Sigmoid colon (tissue), 7 donors: ENCODE measurements at regions of chr10 and their contacts with region 1.

Region 1: GRCh38 chr10:4498711-4499251 is 327.2 kb upstream of the AKR1E2 start:
- DNase-seq: no peak
- H3K4me3 ChIP-seq: no peak overlapping the region
- H3K27ac ChIP-seq: peak overlapping the region; percentile 77 to 88 (median 83)
- H3K4me1 ChIP-seq: peaks cover 0 to 17% (median 15%) of the 10 kb centered on the region in 4 donors
- H3K27me3 ChIP-seq: no peaks in the 10 kb centered on the region
- CTCF ChIP-seq: no peak
- EP300 ChIP-seq: peak in 2 of 4 donors; percentile 22 to 57
- POLR2A ChIP-seq: no peak

Region 2: DNA sequence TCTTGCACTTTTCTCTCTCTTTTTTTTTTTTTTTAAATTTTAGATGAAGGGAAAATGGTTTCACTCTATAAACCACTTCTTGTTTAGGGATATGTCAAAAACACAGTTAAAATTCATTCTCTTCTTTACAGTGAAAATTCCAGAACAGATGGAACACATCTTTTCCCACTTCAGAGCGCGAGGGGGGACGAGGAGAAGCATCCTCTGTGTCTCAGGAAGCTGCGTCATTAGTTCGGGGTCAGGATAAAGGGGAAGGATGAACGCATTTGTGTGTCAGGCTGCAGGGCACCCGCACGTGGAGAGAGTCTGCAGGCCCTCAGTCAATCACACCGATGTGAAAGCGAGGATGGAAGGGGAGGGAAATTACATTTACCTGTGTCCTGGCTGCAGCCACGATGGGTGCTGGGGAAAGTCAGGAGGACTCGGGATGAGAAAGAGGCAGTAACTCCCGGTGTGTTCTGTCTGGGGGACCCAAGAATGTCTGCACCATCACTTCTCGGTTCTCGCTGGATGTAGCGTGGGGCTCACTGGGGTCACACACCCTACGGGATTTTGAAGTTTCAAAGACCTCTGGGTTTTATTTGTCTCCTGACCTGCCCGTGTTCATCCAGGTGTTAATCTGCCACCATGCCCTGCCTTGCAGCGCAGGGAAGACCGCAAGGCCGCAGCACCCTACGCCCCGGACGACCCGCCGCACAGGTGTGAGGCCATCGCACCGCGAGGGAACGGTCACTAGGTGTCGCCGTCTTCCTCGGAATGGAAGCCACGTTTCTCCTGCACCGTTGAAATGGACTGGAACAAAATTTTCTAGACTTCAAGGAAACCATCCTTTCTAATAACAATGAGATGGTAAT is 1259.5 kb before region 1 on chr10:
- intact Hi-C with region 1: loop called (anchors 10 kb)
- DNase-seq: peak; percentile 86
- H3K4me3 ChIP-seq: no peak overlapping the region
- H3K27ac ChIP-seq: peak overlapping the region in 3 of 4 donors; percentile 2 to 52 (median 38)
- H3K4me1 ChIP-seq: peaks cover 0 to 17% (median 3%) of the 10 kb centered on the region in 4 donors
- H3K27me3 ChIP-seq: no peaks in the 10 kb centered on the region
- CTCF ChIP-seq: peak; percentile 81 to 93 (median 90)
- EP300 ChIP-seq: no peak
- POLR2A ChIP-seq: no peak

Region 3: GRCh38 chr10:3595736-3596135 is 903.0 kb before region 1 on chr10:
- intact Hi-C with region 1: no loop called
- DNase-seq: no peak
- H3K4me3 ChIP-seq: no peak overlapping the region
- H3K27ac ChIP-seq: no peak overlapping the region
- H3K4me1 ChIP-seq: no peaks in the 10 kb centered on the region
- H3K27me3 ChIP-seq: no peaks in the 10 kb centered on the region
- CTCF ChIP-seq: no peak
- EP300 ChIP-seq: no peak
- POLR2A ChIP-seq: no peak

Region 4: DNA sequence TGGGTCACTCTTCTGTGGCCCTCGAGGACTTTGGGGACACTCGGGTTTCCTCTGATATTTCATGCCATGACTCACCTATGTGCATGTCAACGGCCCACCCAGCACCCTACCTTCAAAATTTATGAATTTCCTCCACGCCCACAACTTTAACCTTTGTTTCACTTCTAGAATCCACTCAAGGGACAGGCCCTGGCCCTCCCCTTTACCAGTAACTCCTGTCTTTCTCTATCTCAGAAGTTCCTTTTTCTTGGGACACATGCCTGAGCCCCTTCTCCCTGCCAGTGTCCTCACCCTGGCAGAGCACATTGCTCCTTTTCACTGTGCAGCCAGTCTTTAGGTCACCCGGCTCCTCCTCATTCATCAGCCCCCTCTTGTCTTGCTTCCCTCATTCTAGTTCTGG is 431.2 kb before region 1 on chr10:
- intact Hi-C with region 1: loop called (anchors 10 kb)
- DNase-seq: no peak
- H3K4me3 ChIP-seq: no peak overlapping the region
- H3K27ac ChIP-seq: no peak overlapping the region
- H3K4me1 ChIP-seq: no peaks in the 10 kb centered on the region
- H3K27me3 ChIP-seq: no peaks in the 10 kb centered on the region
- CTCF ChIP-seq: no peak
- EP300 ChIP-seq: no peak
- POLR2A ChIP-seq: no peak

Region 5: DNA sequence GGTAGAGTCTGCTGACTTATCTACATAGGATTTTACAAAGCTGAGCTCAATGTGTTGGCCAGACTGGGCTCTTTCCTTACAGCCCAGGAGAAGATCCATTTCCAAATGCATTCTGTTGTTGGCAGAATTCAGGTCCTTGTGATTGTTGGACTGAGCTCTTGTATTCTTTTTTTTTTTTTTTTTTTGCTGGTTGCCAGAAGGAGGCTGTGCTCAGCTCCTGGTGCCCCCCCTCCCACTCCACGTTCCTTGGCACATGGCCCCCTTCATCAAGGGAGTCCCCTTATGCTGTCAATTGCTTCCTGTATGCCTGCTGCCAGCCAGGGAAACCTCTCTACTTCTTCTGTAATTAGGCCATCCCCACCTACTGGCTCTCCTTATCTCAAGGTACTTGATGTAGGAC is 190.9 kb before region 1 on chr10:
- intact Hi-C with region 1: no loop called
- DNase-seq: no peak
- H3K4me3 ChIP-seq: no peak overlapping the region
- H3K27ac ChIP-seq: no peak overlapping the region
- H3K4me1 ChIP-seq: peaks cover 0 to 7% (median 2%) of the 10 kb centered on the region in 4 donors
- H3K27me3 ChIP-seq: no peaks in the 10 kb centered on the region
- CTCF ChIP-seq: no peak
- EP300 ChIP-seq: no peak
- POLR2A ChIP-seq: no peak

Region 6: GRCh38 chr10:4671451-4672145 is 172.8 kb after region 1 on chr10:
- intact Hi-C with region 1: no loop called
- DNase-seq: no peak
- H3K4me3 ChIP-seq: no peak overlapping the region
- H3K27ac ChIP-seq: peak overlapping the region in 3 of 4 donors; percentile 8 to 36 (median 15)
- H3K4me1 ChIP-seq: peaks cover 0 to 8% (median 2%) of the 10 kb centered on the region in 4 donors
- H3K27me3 ChIP-seq: no peaks in the 10 kb centered on the region
- CTCF ChIP-seq: no peak
- EP300 ChIP-seq: no peak
- POLR2A ChIP-seq: no peak